GM10248 (cell line): ENCODE measurements at regions of chr3 and their contacts with region 1.

Region 1: DNA sequence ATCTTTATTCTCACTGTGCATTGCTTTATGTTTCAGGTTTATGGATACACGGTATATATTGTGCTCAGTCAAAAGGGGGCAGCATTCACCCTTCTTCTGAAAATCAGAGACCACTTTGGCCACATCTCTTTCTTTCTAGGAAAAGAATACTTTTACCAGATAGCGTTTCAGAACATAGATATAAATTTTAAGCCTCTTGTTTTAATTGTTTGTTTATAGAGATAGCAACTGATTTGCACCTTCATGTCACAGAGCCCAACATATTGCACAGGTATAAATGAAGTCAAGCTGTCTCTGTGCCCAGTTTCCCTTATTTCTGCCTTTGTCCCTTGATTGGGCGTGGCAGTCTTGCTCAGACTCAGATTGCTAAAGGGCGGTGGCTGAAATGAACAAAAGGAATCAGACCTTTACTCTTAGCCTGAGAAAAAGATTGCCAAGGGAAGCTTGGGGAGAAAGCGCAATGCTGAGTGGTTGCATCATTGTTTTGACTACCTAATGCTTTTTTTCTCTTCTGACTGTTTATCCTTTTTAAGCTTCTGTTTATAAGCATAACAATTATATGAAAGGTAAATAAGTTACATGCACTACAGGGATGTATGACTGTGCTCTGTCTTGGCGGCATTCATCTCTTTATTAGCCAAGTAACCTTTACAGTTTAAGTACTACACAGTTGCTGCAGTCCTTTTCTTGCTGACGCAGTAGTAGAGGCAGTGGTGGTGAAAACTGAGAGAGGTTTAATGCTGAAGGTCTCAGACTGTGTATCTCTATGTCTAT is 70.8 kb upstream of the ZBTB20 start:
- DNase-seq: peak; percentile 26
- CTCF ChIP-seq: peak; percentile 50

Region 2: DNA sequence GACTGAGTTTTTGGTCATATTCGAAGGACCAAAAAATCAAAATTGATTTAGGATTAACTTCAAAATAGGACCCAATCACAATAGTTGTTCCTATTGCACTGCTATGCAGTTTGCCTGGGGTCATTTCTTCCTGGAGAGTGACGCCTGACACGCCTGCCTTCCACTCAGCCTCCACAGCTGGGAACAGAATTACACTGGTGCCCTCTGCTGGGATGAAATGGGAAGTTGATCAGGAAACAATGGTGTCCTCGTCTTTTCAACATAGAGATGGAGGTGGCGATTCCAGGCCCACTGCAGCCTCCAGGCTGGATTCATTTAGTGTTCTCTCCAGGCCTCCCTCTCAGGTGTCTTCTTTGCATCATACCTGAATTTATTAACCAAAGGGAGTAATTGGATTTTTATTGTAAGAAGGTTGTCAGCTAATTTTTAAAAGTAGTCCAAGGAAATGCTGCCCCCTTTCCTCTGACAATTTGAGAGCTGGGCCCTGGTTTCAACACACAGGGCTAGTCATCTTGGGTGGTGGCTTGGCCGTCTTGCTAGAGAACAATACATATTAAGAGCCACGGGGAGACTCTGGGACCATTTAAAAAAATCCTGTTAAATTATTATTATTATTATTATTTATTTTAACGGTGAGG is 475.1 kb after region 1 on chr3:
- CTCF ChIA-PET with region 1: interaction called, 15 read pairs
- POLR2A ChIA-PET with region 1: no interaction called
- DNase-seq: peak; percentile 65
- CTCF ChIP-seq: peak; percentile 77